ENCODE measurements at regions of chr14 and their contacts with region 1.

Region 1: GRCh38 chr14:106347890-106348755 is 821.7 kb downstream of the TMEM121 start:
- DNase-seq: no peak
- H3K4me3 Mint-ChIP-seq: no peak overlapping the region
- H3K27ac Mint-ChIP-seq: no peak overlapping the region
- H3K4me1 Mint-ChIP-seq: no peaks in the 10 kb centered on the region
- H3K27me3 Mint-ChIP-seq: peaks cover 48% of the 10 kb centered on the region

Region 2: DNA sequence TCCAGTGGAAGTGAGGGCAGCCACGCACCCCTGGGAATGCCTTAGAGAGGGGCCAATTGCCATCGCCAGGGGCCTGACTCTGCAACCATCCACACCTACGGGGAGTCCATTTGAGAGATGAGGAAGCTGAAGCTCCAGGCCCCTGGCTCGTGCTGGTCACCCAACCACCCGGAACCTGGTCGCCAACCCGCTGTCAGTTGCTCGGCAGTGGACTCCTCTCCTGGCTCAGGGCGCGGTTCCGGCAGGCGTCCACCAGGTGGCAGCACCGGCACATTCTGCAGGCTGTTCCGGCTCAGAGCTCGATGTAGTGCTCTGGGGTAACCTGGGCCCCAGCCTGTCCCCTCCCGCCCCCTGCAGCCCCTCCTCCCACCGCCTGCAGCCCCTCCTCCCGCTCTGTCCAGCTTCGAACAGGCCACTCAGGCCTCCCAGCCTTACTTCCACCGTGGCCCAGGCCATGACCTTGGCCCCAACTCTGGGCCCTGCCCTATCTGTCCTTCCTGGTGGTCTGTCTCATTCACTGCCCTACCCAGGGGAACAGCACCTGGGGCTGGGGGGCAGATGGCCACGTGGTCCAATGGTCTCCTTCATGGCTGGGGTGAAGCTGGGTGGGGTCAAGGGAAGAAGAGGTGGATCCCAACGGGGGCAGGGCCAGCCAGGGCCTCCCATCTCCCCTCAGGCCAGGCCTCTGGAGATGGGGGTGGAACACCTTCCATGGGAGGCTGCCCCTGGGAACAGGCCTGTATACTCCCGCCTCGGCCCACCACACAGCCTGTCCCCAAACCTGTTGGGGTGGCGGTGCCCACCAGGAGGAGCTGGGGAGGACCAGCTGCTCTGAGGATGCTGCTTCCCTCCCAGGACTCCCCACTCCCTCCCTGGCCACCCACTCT is 1579.4 kb before region 1 on chr14:
- intact Hi-C with region 1: no loop called
- DNase-seq: peak; percentile 86
- H3K4me3 Mint-ChIP-seq: no peak overlapping the region
- H3K27ac Mint-ChIP-seq: no peak overlapping the region
- H3K4me1 Mint-ChIP-seq: no peaks in the 10 kb centered on the region
- H3K27me3 Mint-ChIP-seq: no peaks in the 10 kb centered on the region

Region 3: DNA sequence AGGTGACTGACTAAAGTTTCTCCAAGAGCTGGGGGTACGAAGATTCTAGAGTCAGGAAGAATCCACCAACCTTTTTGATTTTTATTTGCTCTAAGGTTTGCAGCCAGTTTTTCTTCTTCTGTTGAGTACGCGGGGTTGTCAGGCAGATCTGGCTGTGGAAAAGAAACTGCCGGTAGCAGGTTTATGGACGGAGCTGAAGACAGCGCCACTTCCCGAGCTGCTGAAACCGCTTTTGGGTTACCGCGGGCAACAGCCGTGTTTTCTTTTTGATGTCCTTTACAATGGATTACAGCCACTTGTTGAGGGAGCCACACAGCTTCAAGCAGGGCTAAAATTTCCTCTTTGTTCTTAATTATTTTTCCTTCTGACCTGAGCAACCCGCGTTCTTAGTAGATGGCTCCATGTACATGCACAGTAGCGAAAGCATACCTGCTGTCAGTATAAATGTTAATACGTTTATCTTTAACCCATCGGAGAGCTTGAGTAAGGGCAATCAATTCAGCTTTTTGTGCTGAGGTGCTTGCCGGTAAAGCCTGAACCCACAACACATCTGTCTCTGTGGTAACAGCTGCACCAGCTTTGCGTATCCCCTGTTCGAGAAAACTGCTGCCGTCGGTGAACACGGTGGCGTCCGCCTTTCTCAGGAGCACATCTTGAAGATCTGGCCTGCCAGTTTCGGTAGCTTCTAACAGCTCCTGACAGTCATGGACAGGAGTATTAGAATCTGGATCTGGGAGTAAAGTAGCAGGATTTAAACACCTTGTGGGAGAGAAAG is 147.4 kb before region 1 on chr14:
- intact Hi-C with region 1: no loop called
- DNase-seq: no peak
- H3K4me3 Mint-ChIP-seq: peak overlapping the region; percentile 28
- H3K27ac Mint-ChIP-seq: no peak overlapping the region
- H3K4me1 Mint-ChIP-seq: peaks cover 22% of the 10 kb centered on the region
- H3K27me3 Mint-ChIP-seq: peaks cover 50% of the 10 kb centered on the region

Region 4: GRCh38 chr14:106327234-106327633 is 20.9 kb before region 1 on chr14:
- intact Hi-C with region 1: loop called (anchors 1 kb)
- DNase-seq: no peak
- H3K4me3 Mint-ChIP-seq: no peak overlapping the region
- H3K27ac Mint-ChIP-seq: no peak overlapping the region
- H3K4me1 Mint-ChIP-seq: no peaks in the 10 kb centered on the region
- H3K27me3 Mint-ChIP-seq: peaks cover 30% of the 10 kb centered on the region